ENCODE measurements at regions of chr19 and their contacts with region 1.

Region 1: DNA sequence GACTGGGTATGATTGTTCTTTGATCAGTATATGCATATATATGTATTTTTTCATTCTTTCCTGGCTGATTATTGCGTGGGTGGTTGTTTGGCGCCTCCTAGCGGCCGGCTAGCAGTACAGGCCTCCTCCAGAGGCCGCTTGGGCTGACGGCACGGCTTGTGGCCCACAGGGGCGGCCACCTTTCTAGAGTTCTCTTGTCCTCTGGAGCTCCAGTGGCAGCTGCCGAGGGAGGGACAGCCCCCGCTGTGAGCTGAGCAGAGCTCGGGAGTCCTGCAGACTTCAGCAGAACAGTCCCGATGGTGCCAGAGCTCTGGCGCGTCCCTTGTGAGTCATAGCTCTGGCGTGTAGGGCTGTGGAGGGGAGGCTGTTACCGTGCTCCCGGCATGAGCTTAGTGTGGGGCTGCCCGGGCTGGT is 22.5 kb upstream of the ZNF429 start:
- DNase-seq: peak; percentile 73 to 90 (median 76)
- H3K4me3 ChIP-seq: peak overlapping the region in 2 of 7 experiments; percentile 11 to 66
- H3K27ac ChIP-seq: no peak overlapping the region
- H3K4me1 ChIP-seq: no peaks in the 10 kb centered on the region
- H3K27me3 ChIP-seq: no peaks in the 10 kb centered on the region

Region 2: GRCh38 chr19:21166436-21166835 is 316.4 kb before region 1 on chr19:
- CTCF ChIA-PET with region 1: no interaction called
- POLR2A ChIA-PET with region 1: no interaction called
- DNase-seq: no peak
- H3K4me3 ChIP-seq: no peak overlapping the region
- H3K27ac ChIP-seq: no peak overlapping the region
- H3K4me1 ChIP-seq: no peaks in the 10 kb centered on the region
- H3K27me3 ChIP-seq: no peaks in the 10 kb centered on the region

Region 3: DNA sequence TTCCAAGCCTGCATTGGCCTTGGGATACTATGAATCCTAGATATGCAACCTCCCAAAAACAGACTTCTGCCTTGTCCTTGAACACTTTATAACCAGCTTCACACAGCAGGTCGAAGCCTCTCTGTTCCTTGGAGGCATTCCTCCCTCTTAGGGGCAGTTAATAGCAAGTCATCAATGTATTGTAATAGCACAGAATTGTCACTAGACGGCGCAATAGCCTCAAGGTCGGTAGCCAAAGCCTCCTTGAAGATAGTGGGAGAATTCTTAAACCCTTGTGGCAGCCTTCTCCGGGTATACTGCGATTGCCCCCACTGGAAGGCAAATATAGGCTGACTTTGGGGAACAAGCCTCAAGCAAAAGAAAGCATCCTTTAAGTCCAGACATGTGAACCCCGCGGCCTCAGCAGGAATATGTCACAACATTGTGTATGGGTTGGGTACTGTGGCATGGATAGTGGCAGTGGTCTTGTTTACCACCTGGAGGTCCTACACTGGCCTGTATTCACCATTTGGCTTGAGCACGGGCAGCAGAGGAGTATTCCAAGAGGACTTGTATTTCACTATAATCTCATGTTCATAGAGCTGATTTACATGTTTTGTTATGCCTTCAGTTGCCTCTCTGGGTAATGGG is 279.9 kb before region 1 on chr19:
- CTCF ChIA-PET with region 1: interaction called, 22 read pairs
- POLR2A ChIA-PET with region 1: no interaction called
- DNase-seq: peak; percentile 74 to 90 (median 79)
- H3K4me3 ChIP-seq: no peak overlapping the region
- H3K27ac ChIP-seq: no peak overlapping the region
- H3K4me1 ChIP-seq: no peaks in the 10 kb centered on the region
- H3K27me3 ChIP-seq: no peaks in the 10 kb centered on the region

Region 4: GRCh38 chr19:21492947-21493906 is 10.4 kb after region 1 on chr19:
- CTCF ChIA-PET with region 1: interaction called, 14 read pairs
- POLR2A ChIA-PET with region 1: no interaction called
- DNase-seq: no peak
- H3K4me3 ChIP-seq: no peak overlapping the region
- H3K27ac ChIP-seq: no peak overlapping the region
- H3K4me1 ChIP-seq: no peaks in the 10 kb centered on the region
- H3K27me3 ChIP-seq: no peaks in the 10 kb centered on the region

Region 5: DNA sequence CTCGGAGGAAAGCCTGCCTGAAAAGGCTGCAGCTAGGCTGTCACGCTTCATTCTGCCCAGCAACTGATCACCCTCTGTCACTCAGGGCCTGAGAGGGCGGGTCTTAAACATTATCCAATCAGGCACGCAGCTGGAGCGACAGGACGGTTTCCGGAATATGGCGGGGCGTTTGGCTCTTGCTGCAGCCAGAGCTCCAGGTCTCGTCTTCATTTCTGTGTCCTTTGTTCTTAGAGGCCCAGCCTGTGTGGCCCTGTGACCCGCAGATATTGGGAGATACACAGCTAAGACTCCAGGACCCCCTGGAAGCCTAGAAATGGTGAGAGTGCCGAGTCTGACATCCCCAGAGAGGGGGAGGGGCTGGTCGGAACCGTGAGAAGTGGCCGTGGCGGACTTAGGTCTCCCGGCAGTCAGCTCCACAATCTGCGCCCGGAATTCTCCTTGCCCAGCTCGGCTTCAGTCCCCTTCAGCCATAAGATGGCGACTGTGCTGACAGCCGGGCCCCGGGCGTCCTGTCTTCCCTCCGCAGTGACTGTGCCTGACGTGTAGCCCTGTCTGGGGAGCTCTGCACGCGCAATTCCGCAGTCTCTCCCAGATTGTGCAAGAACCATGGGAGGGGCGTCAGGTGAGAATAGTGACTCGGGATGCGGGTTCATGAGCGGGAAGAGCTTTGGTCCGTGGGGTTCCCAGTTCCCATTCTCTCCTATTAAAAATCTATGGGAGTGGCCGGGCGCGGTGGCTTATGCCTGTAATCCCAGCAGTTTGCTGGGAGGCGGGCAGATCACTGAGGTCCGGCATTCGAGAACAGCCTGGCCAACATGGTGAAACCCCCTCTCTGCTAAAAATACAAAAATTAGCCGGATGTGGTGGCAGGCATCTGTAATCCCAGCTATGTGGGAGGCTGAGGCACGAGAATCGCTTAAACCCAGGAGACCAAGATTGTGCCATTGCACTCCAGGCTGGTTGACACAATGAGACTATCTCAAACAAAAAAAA is 22.9 kb after region 1 on chr19 and contains the start of gene ZNF429:
- CTCF ChIA-PET with region 1: interaction called, 12 read pairs
- POLR2A ChIA-PET with region 1: no interaction called
- DNase-seq: peak; percentile 96 to 98 (median 96)
- H3K4me3 ChIP-seq: peak within 1 kb of the TSS; percentile 70 to 98 (median 96)
- H3K27ac ChIP-seq: peak within 1 kb of the TSS; percentile 90 to 96
- H3K4me1 ChIP-seq: peaks cover 5 to 22% (median 9%) of the 10 kb centered on the region in 4 experiments
- H3K27me3 ChIP-seq: no peaks in the 10 kb centered on the region

Region 6: DNA sequence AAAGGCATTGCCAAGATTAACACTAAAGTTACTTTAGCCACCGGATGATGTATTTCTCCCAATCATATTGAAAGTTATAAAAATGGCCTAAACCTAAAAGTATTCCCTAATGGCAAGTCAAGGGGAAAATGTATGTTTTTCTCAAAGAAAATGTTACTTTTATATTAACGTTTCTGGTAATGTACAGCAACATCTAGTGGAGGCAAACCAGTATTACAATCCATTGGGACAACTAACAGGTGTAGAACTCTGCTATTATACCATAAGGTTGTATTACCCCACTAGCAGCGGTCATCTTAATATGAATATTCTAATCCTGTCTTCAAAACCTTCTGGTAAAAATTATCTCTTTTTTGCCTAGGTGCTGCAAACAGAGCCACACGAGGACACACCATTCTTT is 215.3 kb after region 1 on chr19:
- CTCF ChIA-PET with region 1: interaction called, 17 read pairs
- POLR2A ChIA-PET with region 1: no interaction called
- DNase-seq: peak; percentile 54 to 78 (median 65)
- H3K4me3 ChIP-seq: no peak overlapping the region
- H3K27ac ChIP-seq: no peak overlapping the region
- H3K4me1 ChIP-seq: no peaks in the 10 kb centered on the region
- H3K27me3 ChIP-seq: no peaks in the 10 kb centered on the region

Measured in common myeloid progenitor, CD34-positive (primary cell).